Heart left ventricle (tissue), 16 donors: ENCODE measurements at regions of chr7 and their contacts with region 1.

Region 1: DNA sequence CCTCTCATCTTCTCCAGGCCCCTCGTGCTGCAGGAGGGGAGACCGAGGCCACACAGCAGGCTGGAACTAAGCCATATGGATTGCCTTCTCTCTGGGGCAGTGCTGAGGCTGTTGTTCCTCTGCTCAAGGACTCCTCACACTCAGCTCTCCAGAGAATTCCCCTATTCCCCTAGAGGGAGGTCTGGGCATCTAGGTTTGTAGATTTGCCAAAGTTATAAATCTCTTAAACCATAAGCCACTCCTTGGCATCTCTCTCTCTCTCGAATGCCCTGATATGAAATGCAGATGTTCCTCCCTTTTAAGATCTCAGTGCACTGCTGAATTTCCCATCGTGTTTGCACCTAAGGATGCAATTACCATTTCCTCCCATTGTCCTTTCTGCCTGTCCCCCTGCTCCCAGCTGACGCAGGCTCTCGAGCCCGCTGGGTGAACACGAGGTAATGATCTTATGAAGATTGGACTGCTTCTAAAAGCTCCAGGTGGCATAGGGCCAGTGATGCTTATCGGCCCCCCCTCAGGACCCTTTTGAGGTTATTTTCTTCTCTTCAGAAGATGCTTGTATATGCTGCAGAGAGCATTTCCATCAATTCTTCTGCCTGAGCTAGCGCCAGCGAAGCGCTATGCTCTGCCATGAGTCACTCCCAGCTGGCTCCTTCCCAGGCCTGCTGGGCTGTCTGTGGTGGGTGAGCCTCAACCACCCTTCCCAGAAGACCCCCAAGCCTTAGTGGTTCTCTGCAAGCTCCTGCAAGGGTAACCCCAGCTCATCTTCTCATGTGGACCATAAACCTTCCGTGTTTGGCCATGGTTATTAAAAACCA is 41.6 kb upstream of the AQP1 start:
- DNase-seq: peak; percentile 60 to 73 (median 72)
- ATAC-seq: peak in 3 of 4 donors; percentile 50 to 87 (median 53)
- H3K4me3 ChIP-seq: no peak overlapping the region
- H3K27ac ChIP-seq: peak overlapping the region in 9 of 12 donors; percentile 36 to 74 (median 56)
- H3K4me1 ChIP-seq: peaks cover 0 to 62% (median 37%) of the 10 kb centered on the region in 12 donors
- H3K27me3 ChIP-seq: no peaks in the 10 kb centered on the region
- CTCF ChIP-seq: no peak
- POLR2A ChIP-seq: no peak

Region 2: GRCh38 chr7:30814700-30815387 is 55.2 kb before region 1 on chr7:
- intact Hi-C with region 1: loop called in 3 of 10 experiments (anchors 5 kb)
- DNase-seq: peak in 2 of 5 donors; percentile 45 to 60
- ATAC-seq: peak in 3 of 4 donors; percentile 22 to 65 (median 41)
- H3K4me3 ChIP-seq: no peak overlapping the region
- H3K27ac ChIP-seq: peak overlapping the region; percentile 66 to 88 (median 81)
- H3K4me1 ChIP-seq: peaks cover 6 to 57% (median 44%) of the 10 kb centered on the region in 12 donors
- H3K27me3 ChIP-seq: no peaks in the 10 kb centered on the region
- CTCF ChIP-seq: no peak
- POLR2A ChIP-seq: no peak

Region 3: DNA sequence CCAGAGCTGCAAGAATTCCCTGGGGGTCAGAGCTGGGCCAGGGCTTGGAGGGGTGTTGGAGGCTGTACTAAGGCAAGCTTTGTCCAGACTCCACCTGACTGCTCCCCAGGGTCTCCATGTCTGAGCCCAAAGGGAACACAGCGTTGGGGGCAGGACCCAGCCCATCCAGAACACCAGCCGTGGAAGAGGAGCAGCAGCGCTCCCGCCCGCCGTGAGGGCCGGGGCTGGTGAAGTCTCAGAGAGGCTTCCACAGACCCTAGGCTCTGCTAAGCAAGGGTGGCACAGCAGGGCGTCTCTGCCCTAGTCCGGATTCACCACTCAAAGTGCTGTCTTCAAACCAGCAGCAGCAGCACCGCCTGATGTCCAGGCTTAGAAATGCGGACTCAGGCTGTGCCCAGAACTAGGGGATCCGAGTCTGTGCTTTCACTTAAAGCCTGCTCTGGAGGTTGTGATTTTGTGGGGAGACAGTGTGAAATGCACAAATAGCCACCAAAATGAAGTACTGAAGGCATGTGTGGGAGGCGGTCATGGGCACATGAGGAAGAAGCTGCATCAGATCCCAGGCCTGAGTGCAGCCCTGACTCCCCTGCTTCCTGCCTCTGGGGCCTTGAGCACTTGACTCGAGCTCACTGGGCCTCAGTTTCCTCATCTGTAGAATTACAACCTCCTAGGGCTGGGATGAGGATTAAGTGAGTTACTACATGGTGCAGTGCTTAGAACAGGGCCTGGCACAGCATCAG is 25.0 kb after region 1 on chr7:
- intact Hi-C with region 1: loop called in 1 of 10 experiments (anchors 2 kb)
- DNase-seq: peak in 1 of 5 donors; percentile 30
- ATAC-seq: no peak
- H3K4me3 ChIP-seq: no peak overlapping the region
- H3K27ac ChIP-seq: peak overlapping the region in 7 of 12 donors; percentile 15 to 73 (median 70)
- H3K4me1 ChIP-seq: peaks cover 19 to 80% (median 66%) of the 10 kb centered on the region in 12 donors
- H3K27me3 ChIP-seq: no peaks in the 10 kb centered on the region
- CTCF ChIP-seq: no peak
- POLR2A ChIP-seq: no peak

Region 4: DNA sequence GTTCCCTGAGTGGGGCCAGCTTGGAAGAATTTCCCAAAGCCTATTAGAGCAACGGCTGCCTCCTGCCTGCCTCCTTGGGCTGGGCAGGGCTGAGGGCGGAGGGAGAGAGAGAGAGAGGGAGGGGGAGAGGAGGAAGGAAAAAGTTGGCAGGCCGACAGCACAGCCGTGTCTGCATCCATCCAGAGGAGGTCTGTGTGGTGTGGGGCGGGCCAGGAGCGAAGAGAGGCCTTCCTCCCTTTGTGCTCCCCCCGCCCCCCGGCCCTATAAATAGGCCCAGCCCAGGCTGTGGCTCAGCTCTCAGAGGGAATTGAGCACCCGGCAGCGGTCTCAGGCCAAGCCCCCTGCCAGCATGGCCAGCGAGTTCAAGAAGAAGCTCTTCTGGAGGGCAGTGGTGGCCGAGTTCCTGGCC is 41.6 kb after region 1 on chr7 and contains the start of gene AQP1:
- intact Hi-C with region 1: loop called in 1 of 10 experiments (anchors 5 kb)
- DNase-seq: peak; percentile 87 to 94 (median 91)
- ATAC-seq: peak; percentile 67 to 74 (median 70)
- H3K4me3 ChIP-seq: peak within 1 kb of the TSS; percentile 42 to 82 (median 61)
- H3K27ac ChIP-seq: peak within 1 kb of the TSS; percentile 73 to 94 (median 82)
- H3K4me1 ChIP-seq: peaks cover 11 to 98% (median 70%) of the 10 kb centered on the region in 12 donors
- H3K27me3 ChIP-seq: no peaks in the 10 kb centered on the region
- CTCF ChIP-seq: peak in 3 of 12 donors; percentile 4 to 39 (median 34)
- POLR2A ChIP-seq: peak; percentile 64 to 84
- total RNA-seq, gene AQP1: 113 to 420 (median 206) TPM

Region 5: GRCh38 chr7:30931161-30931928 is 61.3 kb after region 1 on chr7:
- intact Hi-C with region 1: loop called in 2 of 10 experiments (anchors 5 kb)
- DNase-seq: peak in 4 of 5 donors; percentile 47 to 76 (median 56)
- ATAC-seq: peak; percentile 2 to 51 (median 29)
- H3K4me3 ChIP-seq: peak overlapping the region in 1 of 12 donors; percentile 4
- H3K27ac ChIP-seq: peak overlapping the region in 11 of 12 donors; percentile 42 to 67 (median 58)
- H3K4me1 ChIP-seq: peaks cover 0 to 56% (median 29%) of the 10 kb centered on the region in 12 donors
- H3K27me3 ChIP-seq: no peaks in the 10 kb centered on the region
- CTCF ChIP-seq: no peak
- POLR2A ChIP-seq: no peak

Region 6: GRCh38 chr7:30938435-30939316 is 68.7 kb after region 1 on chr7:
- intact Hi-C with region 1: loop called in 2 of 10 experiments (anchors 5 kb)
- DNase-seq: peak; percentile 81 to 92 (median 85)
- ATAC-seq: peak; percentile 72 to 90 (median 85)
- H3K4me3 ChIP-seq: peak overlapping the region in 7 of 12 donors; percentile 7 to 39 (median 31)
- H3K27ac ChIP-seq: no peak overlapping the region
- H3K4me1 ChIP-seq: peaks cover 0 to 31% (median 12%) of the 10 kb centered on the region in 12 donors
- H3K27me3 ChIP-seq: no peaks in the 10 kb centered on the region
- CTCF ChIP-seq: peak; percentile 95 to 100 (median 98)
- POLR2A ChIP-seq: no peak